ENCODE measurements at regions of chr20 and their contacts with region 1.

Region 1: DNA sequence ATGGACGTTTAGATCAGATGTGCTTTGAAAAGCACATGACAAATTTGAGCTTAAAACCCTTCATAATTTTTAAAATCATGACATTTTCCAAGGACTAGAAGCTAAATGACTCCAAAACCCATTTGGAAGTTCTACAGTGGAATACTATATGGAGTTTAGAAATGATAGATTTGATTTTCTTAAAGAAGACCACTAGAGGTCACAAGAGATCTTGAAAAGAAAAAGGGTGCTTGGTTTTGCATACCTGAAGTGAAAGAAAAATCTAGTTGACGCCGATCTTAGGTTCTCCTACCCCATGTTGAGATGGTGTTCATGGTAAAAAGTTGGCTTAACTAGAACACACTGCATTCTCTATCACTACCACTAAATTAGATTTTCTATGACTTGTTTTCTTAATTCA is 31.5 kb downstream of the CFAP61 start:
- DNase-seq: no peak
- H3K4me3 ChIP-seq: no peak overlapping the region
- H3K27ac ChIP-seq: no peak overlapping the region
- H3K4me1 ChIP-seq: no peaks in the 10 kb centered on the region
- H3K27me3 ChIP-seq: no peaks in the 10 kb centered on the region
- CTCF ChIP-seq: peak; percentile 32

Region 2: GRCh38 chr20:20237093-20237959 is 153.5 kb after region 1 on chr20:
- intact Hi-C with region 1: loop called (anchors 2 kb)
- DNase-seq: peak; percentile 42
- H3K4me3 ChIP-seq: no peak overlapping the region
- H3K27ac ChIP-seq: no peak overlapping the region
- H3K4me1 ChIP-seq: no peaks in the 10 kb centered on the region
- H3K27me3 ChIP-seq: no peaks in the 10 kb centered on the region
- CTCF ChIP-seq: peak; percentile 70

Region 3: DNA sequence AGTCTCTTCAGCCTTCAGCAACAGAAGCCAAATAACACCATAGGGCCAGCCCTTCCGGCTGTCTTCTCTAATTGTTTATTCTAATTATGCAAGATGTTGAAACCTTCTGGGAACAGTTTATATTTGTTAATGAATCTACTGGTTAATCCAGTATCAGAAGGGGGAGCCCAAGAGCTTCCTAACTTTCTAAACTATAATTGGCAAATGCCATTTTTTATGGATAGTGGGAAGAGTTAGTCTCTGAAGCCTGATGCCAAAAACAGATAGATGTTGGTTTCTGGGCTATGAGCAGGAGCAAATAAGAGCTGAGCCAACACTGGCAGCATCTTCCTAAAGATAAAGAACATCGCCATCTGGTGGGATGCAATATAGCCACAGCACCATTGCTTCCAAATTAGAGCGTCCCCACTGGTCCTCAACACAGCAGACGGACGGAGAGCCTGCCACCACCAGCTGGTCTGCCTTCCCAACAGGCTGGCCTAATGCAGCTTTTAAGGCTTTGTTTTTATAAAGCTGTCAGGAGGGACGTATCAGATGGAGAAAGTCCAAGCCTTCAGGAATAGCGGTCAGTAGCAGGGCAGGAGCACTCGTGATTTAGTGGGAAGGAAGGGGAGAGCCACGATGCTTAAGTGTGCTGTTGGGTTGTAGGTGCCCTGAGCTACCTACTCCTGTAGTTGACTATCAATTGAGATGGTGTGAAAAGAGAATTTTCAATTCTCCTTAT is 509.8 kb after region 1 on chr20:
- intact Hi-C with region 1: loop called (anchors 10 kb)
- DNase-seq: no peak
- H3K4me3 ChIP-seq: no peak overlapping the region
- H3K27ac ChIP-seq: no peak overlapping the region
- H3K4me1 ChIP-seq: no peaks in the 10 kb centered on the region
- H3K27me3 ChIP-seq: no peaks in the 10 kb centered on the region
- CTCF ChIP-seq: no peak